CD4-positive, alpha-beta memory T cell (primary cell): ENCODE measurements at regions of chr3 and their contacts with region 1.

Region 1: GRCh38 chr3:12891985-12892839 is 50.8 kb upstream of the RPL32 start:
- DNase-seq: peak; percentile 46 to 53 (median 49)
- H3K4me3 ChIP-seq: no peak overlapping the region
- H3K4me3 Mint-ChIP-seq: peak overlapping the region in 7 of 8 donors; percentile 12 to 72 (median 60)
- H3K27ac ChIP-seq: no peak overlapping the region
- H3K27ac Mint-ChIP-seq: peak overlapping the region in 4 of 7 donors; percentile 2 to 56 (median 16)
- H3K4me1 ChIP-seq: peaks cover 7% of the 10 kb centered on the region
- H3K4me1 Mint-ChIP-seq: peaks cover 7 to 19% (median 13%) of the 10 kb centered on the region in 4 donors
- H3K27me3 ChIP-seq: no peaks in the 10 kb centered on the region
- H3K27me3 Mint-ChIP-seq: peaks cover 18 to 20% of the 10 kb centered on the region in 2 donors

Region 2: GRCh38 chr3:11928381-11928780 is 963.8 kb before region 1 on chr3:
- CTCF ChIA-PET with region 1: no interaction called
- POLR2A ChIA-PET with region 1: no interaction called
- intact Hi-C with region 1: no loop called
- DNase-seq: no peak
- H3K4me3 ChIP-seq: no peak overlapping the region
- H3K4me3 Mint-ChIP-seq: no peak overlapping the region
- H3K27ac ChIP-seq: no peak overlapping the region
- H3K27ac Mint-ChIP-seq: no peak overlapping the region
- H3K4me1 ChIP-seq: no peaks in the 10 kb centered on the region
- H3K4me1 Mint-ChIP-seq: no peaks in the 10 kb centered on the region
- H3K27me3 ChIP-seq: no peaks in the 10 kb centered on the region
- H3K27me3 Mint-ChIP-seq: peaks cover 0 to 6% of the 10 kb centered on the region in 2 donors

Region 3: GRCh38 chr3:12135029-12135657 is 757.1 kb before region 1 on chr3:
- CTCF ChIA-PET with region 1: no interaction called
- POLR2A ChIA-PET with region 1: no interaction called
- intact Hi-C with region 1: loop called (anchors 5 kb)
- DNase-seq: peak; percentile 40 to 51 (median 44)
- H3K4me3 ChIP-seq: no peak overlapping the region
- H3K4me3 Mint-ChIP-seq: no peak overlapping the region
- H3K27ac ChIP-seq: no peak overlapping the region
- H3K27ac Mint-ChIP-seq: no peak overlapping the region
- H3K4me1 ChIP-seq: no peaks in the 10 kb centered on the region
- H3K4me1 Mint-ChIP-seq: peaks cover 0 to 2% (median 0%) of the 10 kb centered on the region in 4 donors
- H3K27me3 ChIP-seq: no peaks in the 10 kb centered on the region
- H3K27me3 Mint-ChIP-seq: peaks cover 10 to 20% of the 10 kb centered on the region in 2 donors

Region 4: DNA sequence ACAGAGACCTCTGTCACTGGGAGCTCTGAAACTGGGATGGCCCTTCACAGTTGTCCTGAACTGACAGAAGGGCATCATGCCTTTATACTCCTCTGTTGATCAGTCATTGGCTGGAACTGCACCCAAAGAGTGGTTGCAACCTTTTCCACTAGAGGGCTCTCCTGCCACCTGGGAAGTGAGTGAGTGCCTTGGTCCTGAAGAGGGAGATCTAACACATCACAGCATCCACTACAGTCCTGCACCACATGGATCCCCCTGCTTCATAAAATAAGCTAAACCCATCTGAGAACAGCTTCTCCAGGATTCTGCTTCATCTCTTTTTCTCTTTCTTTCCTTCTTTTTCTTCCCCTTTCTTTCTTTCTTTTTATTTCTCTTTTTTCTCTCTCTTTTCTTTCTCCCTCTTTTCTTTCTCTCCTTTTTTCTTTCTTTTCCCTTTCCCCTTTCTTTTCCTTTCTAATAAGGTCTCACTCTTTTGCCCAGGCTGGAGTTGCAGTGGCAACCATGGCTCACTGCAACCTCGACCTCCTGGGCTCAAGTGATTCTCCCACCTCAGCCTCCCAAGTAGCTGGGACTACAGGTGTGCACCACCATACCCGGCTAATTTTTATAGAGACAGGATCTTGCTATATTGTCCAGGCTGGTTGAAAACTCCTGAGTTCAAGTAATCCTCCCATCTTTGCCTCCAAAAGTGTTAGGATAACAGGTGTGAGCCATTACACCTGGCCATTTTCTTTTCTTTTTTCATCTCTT is 185.5 kb before region 1 on chr3:
- CTCF ChIA-PET with region 1: interaction called, 4 read pairs
- POLR2A ChIA-PET with region 1: no interaction called
- intact Hi-C with region 1: loop called (anchors 2 kb)
- DNase-seq: peak; percentile 46 to 61 (median 52)
- H3K4me3 ChIP-seq: no peak overlapping the region
- H3K4me3 Mint-ChIP-seq: no peak overlapping the region
- H3K27ac ChIP-seq: no peak overlapping the region
- H3K27ac Mint-ChIP-seq: no peak overlapping the region
- H3K4me1 ChIP-seq: no peaks in the 10 kb centered on the region
- H3K4me1 Mint-ChIP-seq: no peaks in the 10 kb centered on the region
- H3K27me3 ChIP-seq: no peaks in the 10 kb centered on the region
- H3K27me3 Mint-ChIP-seq: peaks cover 1 to 9% of the 10 kb centered on the region in 2 donors

Region 5: GRCh38 chr3:12782172-12782815 is 109.9 kb before region 1 on chr3:
- CTCF ChIA-PET with region 1: interaction called, 43 read pairs
- POLR2A ChIA-PET with region 1: no interaction called
- intact Hi-C with region 1: no loop called
- DNase-seq: no peak
- H3K4me3 ChIP-seq: no peak overlapping the region
- H3K4me3 Mint-ChIP-seq: no peak overlapping the region
- H3K27ac ChIP-seq: no peak overlapping the region
- H3K27ac Mint-ChIP-seq: no peak overlapping the region
- H3K4me1 ChIP-seq: no peaks in the 10 kb centered on the region
- H3K4me1 Mint-ChIP-seq: no peaks in the 10 kb centered on the region
- H3K27me3 ChIP-seq: no peaks in the 10 kb centered on the region
- H3K27me3 Mint-ChIP-seq: peaks cover 11 to 17% of the 10 kb centered on the region in 2 donors

Region 6: GRCh38 chr3:12868039-12869034 is 23.9 kb before region 1 on chr3:
- CTCF ChIA-PET with region 1: interaction called, 38 read pairs
- POLR2A ChIA-PET with region 1: interaction called, 4 read pairs
- intact Hi-C with region 1: loop called (anchors 1 kb)
- DNase-seq: peak; percentile 42 to 71 (median 56)
- H3K4me3 ChIP-seq: peak overlapping the region; percentile 22 to 36
- H3K4me3 Mint-ChIP-seq: peak overlapping the region; percentile 72 to 92 (median 88)
- H3K27ac ChIP-seq: no peak overlapping the region
- H3K27ac Mint-ChIP-seq: peak overlapping the region in 2 of 7 donors; percentile 10 to 19
- H3K4me1 ChIP-seq: peaks cover 13% of the 10 kb centered on the region
- H3K4me1 Mint-ChIP-seq: peaks cover 7 to 23% (median 11%) of the 10 kb centered on the region in 4 donors
- H3K27me3 ChIP-seq: no peaks in the 10 kb centered on the region
- H3K27me3 Mint-ChIP-seq: peaks cover 9 to 15% of the 10 kb centered on the region in 2 donors

Region 7: DNA sequence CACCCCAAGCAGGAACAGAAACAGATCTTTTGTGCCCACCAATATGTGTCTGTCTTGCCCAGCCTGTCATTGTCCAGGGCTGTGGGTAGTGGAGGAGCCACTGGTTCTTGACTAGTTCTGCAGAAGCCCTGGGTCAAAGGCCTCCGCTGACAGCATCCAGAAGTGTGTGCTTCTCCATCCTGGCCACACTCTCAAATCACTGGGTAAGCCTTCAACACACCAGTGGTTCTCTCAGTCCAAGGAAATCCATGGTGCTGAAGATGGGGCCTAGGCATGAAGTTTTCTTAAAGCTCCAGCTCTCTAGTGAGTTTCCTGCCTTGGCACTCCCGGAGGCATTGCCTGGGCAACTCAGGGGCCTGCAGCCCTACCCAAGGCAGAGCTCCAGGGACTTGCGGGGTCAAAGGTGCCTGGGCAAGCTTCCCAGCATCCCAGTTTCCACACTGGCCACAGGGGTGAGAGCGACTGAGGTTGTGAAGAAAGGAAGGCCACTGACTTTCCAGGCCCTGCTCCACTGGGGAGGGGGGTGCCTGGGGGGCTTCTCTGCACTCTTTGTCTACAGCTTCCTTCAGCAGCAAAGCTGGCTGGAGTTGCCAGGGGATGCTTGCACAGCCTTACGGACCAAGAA is 12.9 kb before region 1 on chr3:
- CTCF ChIA-PET with region 1: interaction called, 13 read pairs
- POLR2A ChIA-PET with region 1: no interaction called
- intact Hi-C with region 1: no loop called
- DNase-seq: no peak
- H3K4me3 ChIP-seq: no peak overlapping the region
- H3K4me3 Mint-ChIP-seq: no peak overlapping the region
- H3K27ac ChIP-seq: no peak overlapping the region
- H3K27ac Mint-ChIP-seq: no peak overlapping the region
- H3K4me1 ChIP-seq: no peaks in the 10 kb centered on the region
- H3K4me1 Mint-ChIP-seq: no peaks in the 10 kb centered on the region
- H3K27me3 ChIP-seq: no peaks in the 10 kb centered on the region
- H3K27me3 Mint-ChIP-seq: peaks cover 6 to 8% of the 10 kb centered on the region in 2 donors

Region 8: GRCh38 chr3:12907729-12908128 is 15.5 kb after region 1 on chr3:
- CTCF ChIA-PET with region 1: no interaction called
- POLR2A ChIA-PET with region 1: no interaction called
- intact Hi-C with region 1: no loop called
- DNase-seq: no peak
- H3K4me3 ChIP-seq: no peak overlapping the region
- H3K4me3 Mint-ChIP-seq: no peak overlapping the region
- H3K27ac ChIP-seq: no peak overlapping the region
- H3K27ac Mint-ChIP-seq: no peak overlapping the region
- H3K4me1 ChIP-seq: no peaks in the 10 kb centered on the region
- H3K4me1 Mint-ChIP-seq: no peaks in the 10 kb centered on the region
- H3K27me3 ChIP-seq: no peaks in the 10 kb centered on the region
- H3K27me3 Mint-ChIP-seq: no peaks in the 10 kb centered on the region

Region 9: GRCh38 chr3:13045904-13046568 is 153.8 kb after region 1 on chr3:
- CTCF ChIA-PET with region 1: no interaction called
- POLR2A ChIA-PET with region 1: no interaction called
- intact Hi-C with region 1: no loop called
- DNase-seq: no peak
- H3K4me3 ChIP-seq: no peak overlapping the region
- H3K4me3 Mint-ChIP-seq: no peak overlapping the region
- H3K27ac ChIP-seq: no peak overlapping the region
- H3K27ac Mint-ChIP-seq: peak overlapping the region in 5 of 7 donors; percentile 12 to 62 (median 50)
- H3K4me1 ChIP-seq: no peaks in the 10 kb centered on the region
- H3K4me1 Mint-ChIP-seq: peaks cover 0 to 6% (median 3%) of the 10 kb centered on the region in 4 donors
- H3K27me3 ChIP-seq: no peaks in the 10 kb centered on the region
- H3K27me3 Mint-ChIP-seq: no peaks in the 10 kb centered on the region

Region 10: DNA sequence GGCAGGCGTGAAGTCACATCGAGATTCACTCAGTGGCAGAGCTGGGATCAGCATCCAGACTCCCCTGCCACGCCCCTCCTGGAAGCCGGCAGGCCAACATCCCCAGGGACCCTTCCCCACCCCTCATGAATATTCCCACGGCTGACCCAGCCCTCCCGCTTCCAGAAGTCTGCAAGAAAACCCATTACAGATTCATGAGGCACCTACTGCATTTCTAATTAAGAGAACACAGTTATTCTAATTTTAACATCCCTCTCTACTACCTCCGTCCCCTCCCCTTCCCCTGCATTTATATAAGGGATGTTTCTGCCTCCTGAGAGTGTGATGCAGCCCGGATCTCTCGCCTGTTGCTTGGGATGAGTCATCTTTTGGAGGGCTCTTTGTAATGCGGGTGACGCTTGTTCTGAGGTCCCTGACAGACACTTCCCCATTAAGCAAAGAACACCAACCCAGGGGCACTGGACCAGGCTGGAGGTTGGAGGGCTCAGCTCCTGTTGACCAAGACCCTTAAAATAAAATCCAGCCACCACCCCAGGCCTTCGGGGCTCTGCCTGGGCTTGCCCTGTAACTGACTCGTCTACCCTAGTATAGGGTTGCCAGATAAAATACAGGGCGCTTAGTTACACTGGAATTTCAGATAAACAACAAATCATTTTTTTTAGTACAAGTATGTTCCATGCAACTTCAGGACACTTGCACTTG is 409.2 kb after region 1 on chr3:
- CTCF ChIA-PET with region 1: no interaction called
- POLR2A ChIA-PET with region 1: no interaction called
- intact Hi-C with region 1: no loop called
- DNase-seq: no peak
- H3K4me3 ChIP-seq: no peak overlapping the region
- H3K4me3 Mint-ChIP-seq: no peak overlapping the region
- H3K27ac ChIP-seq: no peak overlapping the region
- H3K27ac Mint-ChIP-seq: no peak overlapping the region
- H3K4me1 ChIP-seq: no peaks in the 10 kb centered on the region
- H3K4me1 Mint-ChIP-seq: peaks cover 0 to 6% (median 4%) of the 10 kb centered on the region in 4 donors
- H3K27me3 ChIP-seq: no peaks in the 10 kb centered on the region
- H3K27me3 Mint-ChIP-seq: peaks cover 12 to 13% of the 10 kb centered on the region in 2 donors